OCI-LY7 (cell line): ENCODE measurements at regions of chr9 and their contacts with region 1.

Region 1: DNA sequence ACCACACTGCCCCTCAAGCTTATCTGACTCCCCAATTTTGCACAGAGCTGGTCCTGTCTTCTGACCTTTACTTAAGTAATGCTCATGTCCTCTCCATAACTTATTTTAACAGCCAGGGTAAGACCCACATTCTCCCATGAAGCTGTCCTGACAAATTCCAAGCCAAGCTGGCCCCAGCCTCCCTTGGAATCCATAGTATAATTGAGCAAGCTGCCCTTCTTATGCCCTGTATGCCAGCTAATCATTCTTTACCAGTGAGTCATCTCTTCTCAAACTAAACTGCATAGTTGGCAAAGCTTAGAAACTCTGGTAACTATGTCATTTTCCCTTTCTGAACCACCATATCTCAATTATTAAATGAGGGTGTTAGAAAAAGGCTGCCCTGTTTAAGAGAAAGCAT is 92.4 kb downstream of the NFIB start:
- DNase-seq: no peak
- H3K4me3 ChIP-seq: no peak overlapping the region
- H3K27ac ChIP-seq: no peak overlapping the region
- H3K4me1 ChIP-seq: no peaks in the 10 kb centered on the region
- CTCF ChIP-seq: no peak

Region 2: GRCh38 chr9:14238552-14238951 is 17.0 kb after region 1 on chr9:
- CTCF ChIA-PET with region 1: no interaction called
- POLR2A ChIA-PET with region 1: interaction called, 11 read pairs
- intact Hi-C with region 1: no loop called
- DNase-seq: no peak
- H3K4me3 ChIP-seq: no peak overlapping the region
- H3K27ac ChIP-seq: no peak overlapping the region
- H3K4me1 ChIP-seq: no peaks in the 10 kb centered on the region
- CTCF ChIP-seq: no peak